Endothelial cell of umbilical vein (primary cell): ENCODE measurements at regions of chr6 and their contacts with region 1.

Region 1: DNA sequence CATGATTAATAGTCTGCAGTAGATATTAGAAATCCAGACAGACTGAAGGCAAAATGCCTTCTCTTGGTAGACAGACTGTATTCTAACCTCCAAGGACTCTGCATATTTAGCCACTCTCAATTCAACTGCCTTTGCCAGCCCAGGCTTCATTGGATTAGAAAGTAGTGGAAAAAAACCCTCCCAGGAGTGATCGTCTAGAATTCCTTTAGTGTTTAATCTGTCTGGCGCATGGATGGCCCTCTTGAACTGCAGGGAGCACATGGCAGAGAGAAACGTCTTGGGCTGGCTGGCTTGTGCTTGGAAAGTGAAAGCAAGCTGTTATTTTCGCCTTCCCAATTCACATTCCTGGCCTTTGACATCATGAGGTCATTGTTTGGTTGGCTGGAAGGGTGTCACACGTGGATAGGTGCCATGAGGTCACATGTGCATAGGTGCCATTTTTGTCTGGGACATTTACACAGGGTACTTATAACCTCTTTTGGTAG is 30.9 kb upstream of the NEDD9 start:
- DNase-seq: peak; percentile 86
- H3K4me3 ChIP-seq: no peak overlapping the region
- H3K27ac ChIP-seq: peak overlapping the region; percentile 67
- H3K4me1 ChIP-seq: peaks cover 19% of the 10 kb centered on the region
- H3K27me3 ChIP-seq: no peaks in the 10 kb centered on the region
- CTCF ChIP-seq: no peak
- POLR2A ChIP-seq: no peak

Region 2: GRCh38 chr6:11172501-11173332 is 90.6 kb before region 1 on chr6:
- CTCF ChIA-PET with region 1: no interaction called
- POLR2A ChIA-PET with region 1: no interaction called
- dilution Hi-C with region 1: no loop called
- intact Hi-C with region 1: loop called (anchors 1 kb)
- DNase-seq: peak; percentile 71
- H3K4me3 ChIP-seq: no peak overlapping the region
- H3K27ac ChIP-seq: no peak overlapping the region
- H3K4me1 ChIP-seq: no peaks in the 10 kb centered on the region
- H3K27me3 ChIP-seq: no peaks in the 10 kb centered on the region
- CTCF ChIP-seq: peak; percentile 78 to 82
- POLR2A ChIP-seq: no peak

Region 3: DNA sequence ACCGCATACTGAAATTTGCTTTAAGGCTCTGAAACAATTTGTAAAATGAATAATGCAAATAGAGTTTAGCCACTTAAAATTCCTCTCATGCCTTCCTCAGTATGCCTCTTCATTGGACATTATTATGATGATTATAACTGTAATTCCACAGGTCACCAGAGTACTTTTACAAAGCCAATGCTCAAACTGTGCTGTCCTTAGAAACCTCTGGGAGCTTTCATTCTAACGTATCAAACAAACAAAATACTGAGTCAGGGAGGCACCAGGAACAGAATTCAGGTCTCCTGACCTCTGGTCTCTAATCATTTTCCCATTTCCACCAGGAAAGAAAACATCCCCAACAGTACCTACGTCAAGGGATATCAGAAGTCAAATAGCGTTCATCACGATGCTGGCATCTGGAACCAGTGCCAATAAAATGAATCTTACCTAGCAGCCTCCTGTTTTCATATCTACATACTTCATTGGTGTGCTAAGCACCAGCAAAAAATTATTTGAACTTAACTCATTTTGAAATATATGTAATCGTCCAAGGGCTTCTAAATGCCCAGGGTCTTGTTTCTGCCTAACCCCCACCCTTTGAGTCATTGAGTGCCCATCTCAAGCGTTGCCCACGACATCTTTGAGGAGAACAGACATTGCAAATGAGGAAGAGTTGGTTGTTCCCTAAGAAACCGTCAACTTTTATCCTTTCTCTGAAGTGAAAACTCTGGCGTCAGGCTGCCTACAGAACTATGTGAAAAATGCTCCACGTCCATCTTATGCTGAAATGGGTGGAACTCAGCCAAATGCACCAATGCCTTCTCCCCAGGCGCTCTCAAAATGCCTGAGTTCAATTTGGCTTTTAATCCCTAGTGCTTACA is 68.7 kb before region 1 on chr6:
- CTCF ChIA-PET with region 1: no interaction called
- POLR2A ChIA-PET with region 1: no interaction called
- dilution Hi-C with region 1: no loop called
- intact Hi-C with region 1: loop called (anchors 2 kb)
- DNase-seq: peak; percentile 91
- H3K4me3 ChIP-seq: peak overlapping the region in 1 of 3 experiments; percentile 9
- H3K27ac ChIP-seq: peak overlapping the region; percentile 98
- H3K4me1 ChIP-seq: peaks cover 37% of the 10 kb centered on the region
- H3K27me3 ChIP-seq: no peaks in the 10 kb centered on the region
- CTCF ChIP-seq: peak in 1 of 2 donors; percentile 9
- POLR2A ChIP-seq: peak; percentile 38

Region 4: DNA sequence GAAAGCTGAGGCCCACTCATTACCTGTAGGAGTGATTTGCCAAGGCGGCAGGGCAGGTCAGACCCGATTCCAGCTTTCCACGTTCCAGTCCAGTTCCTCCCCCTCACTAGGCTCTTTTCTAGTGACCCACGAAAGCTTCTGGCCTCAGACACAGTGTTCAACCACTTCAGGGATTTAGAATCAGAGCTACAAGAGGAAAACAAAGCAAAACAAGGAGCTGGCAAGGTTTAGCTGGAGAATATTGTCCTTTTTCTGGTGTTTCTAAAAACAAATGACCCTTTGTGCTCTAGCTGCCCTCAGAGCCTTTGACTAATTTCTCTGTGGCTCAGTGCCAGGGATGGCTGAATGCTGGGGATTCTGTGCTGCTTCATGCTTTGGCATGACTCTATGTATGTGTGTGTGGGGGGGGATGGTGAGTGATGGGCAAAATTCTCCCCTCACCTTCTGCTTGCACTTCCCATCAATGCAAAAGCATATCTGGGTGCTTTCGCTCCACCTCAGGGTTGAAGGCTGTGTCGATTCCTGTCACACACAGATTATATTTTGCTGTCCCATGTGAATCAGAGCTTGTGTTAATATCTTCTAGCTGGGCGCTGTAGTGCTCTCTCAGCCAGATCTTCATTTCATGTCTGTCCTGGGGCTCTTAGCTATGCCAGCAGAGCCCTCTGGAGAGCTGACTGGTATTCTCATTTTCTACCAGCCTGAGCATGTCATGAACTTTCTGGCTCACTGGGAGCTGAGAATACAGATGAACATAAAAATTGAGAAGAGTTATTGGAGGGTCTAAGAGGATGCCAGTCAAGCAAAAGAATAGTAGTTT is 11.6 kb before region 1 on chr6:
- CTCF ChIA-PET with region 1: interaction called, 16 read pairs
- POLR2A ChIA-PET with region 1: no interaction called
- dilution Hi-C with region 1: no loop called
- intact Hi-C with region 1: no loop called
- DNase-seq: peak; percentile 92
- H3K4me3 ChIP-seq: no peak overlapping the region
- H3K27ac ChIP-seq: peak overlapping the region; percentile 57
- H3K4me1 ChIP-seq: peaks cover 22% of the 10 kb centered on the region
- H3K27me3 ChIP-seq: no peaks in the 10 kb centered on the region
- CTCF ChIP-seq: no peak
- POLR2A ChIP-seq: no peak

Region 5: GRCh38 chr6:11428895-11429294 is 165.6 kb after region 1 on chr6:
- CTCF ChIA-PET with region 1: no interaction called
- POLR2A ChIA-PET with region 1: no interaction called
- dilution Hi-C with region 1: no loop called
- intact Hi-C with region 1: loop called (anchors 2 kb)
- DNase-seq: no peak
- H3K4me3 ChIP-seq: no peak overlapping the region
- H3K27ac ChIP-seq: peak overlapping the region; percentile 79
- H3K4me1 ChIP-seq: peaks cover 70% of the 10 kb centered on the region
- H3K27me3 ChIP-seq: no peaks in the 10 kb centered on the region
- CTCF ChIP-seq: no peak
- POLR2A ChIP-seq: no peak